ENCODE measurements at regions of chr6 and their contacts with region 1.

Region 1: DNA sequence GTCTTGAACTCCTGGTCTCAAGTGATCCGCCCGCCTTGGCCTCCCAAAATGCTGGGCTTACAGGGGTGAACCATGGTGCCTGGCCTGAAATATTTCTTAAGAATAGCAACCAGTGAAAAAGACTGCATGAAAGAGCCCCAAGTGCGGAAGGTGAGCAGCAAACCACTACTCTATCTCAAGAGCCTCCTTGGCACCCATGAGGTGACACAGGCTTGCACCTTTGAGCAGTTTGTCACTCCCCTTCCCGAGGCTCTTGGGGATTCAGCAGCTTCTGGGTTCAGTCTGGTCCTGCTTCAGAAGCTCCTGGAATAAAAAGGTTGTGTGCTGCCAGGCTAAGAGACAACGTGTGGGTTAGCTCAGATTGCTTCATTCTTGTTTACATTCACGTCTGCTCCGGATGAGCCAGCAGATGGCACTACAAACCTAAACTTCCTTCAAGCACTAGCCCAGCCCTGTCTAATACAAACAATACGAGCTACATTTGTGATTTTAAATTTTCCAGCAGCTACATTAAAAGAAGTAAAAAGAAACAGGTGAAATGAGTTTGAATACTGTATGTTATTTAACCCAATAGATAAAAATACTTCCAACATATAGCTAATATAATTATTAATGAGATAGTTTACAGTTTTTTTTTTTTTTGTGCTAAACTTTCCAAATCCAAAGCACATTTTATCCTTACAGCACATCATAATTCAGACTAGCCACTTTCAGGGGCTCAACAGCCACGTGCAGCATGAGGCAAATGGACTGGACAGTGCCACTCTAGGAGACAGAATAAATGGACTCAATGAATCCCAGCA is 46.2 kb downstream of the GJA10 start:
- DNase-seq: peak; percentile 69
- H3K4me3 ChIP-seq: no peak overlapping the region
- H3K27ac ChIP-seq: no peak overlapping the region
- H3K4me1 ChIP-seq: no peaks in the 10 kb centered on the region
- H3K27me3 ChIP-seq: no peaks in the 10 kb centered on the region
- CTCF ChIP-seq: peak; percentile 65 to 83

Region 2: GRCh38 chr6:89970609-89971337 is 30.3 kb after region 1 on chr6:
- CTCF ChIA-PET with region 1: no interaction called
- dilution Hi-C with region 1: no loop called
- in situ Hi-C with region 1: no loop called
- intact Hi-C with region 1: loop called (anchors 1 kb)
- DNase-seq: peak; percentile 45
- H3K4me3 ChIP-seq: no peak overlapping the region
- H3K27ac ChIP-seq: no peak overlapping the region
- H3K4me1 ChIP-seq: peaks cover 6% of the 10 kb centered on the region
- H3K27me3 ChIP-seq: no peaks in the 10 kb centered on the region
- CTCF ChIP-seq: peak; percentile 54 to 64

Region 3: GRCh38 chr6:89984926-89985750 is 44.7 kb after region 1 on chr6:
- CTCF ChIA-PET with region 1: no interaction called
- dilution Hi-C with region 1: no loop called
- in situ Hi-C with region 1: no loop called
- intact Hi-C with region 1: no loop called
- DNase-seq: no peak
- H3K4me3 ChIP-seq: no peak overlapping the region
- H3K27ac ChIP-seq: no peak overlapping the region
- H3K4me1 ChIP-seq: peaks cover 11% of the 10 kb centered on the region
- H3K27me3 ChIP-seq: no peaks in the 10 kb centered on the region
- CTCF ChIP-seq: no peak

Region 4: GRCh38 chr6:90285611-90286381 is 345.4 kb after region 1 on chr6:
- CTCF ChIA-PET with region 1: interaction called, 17 read pairs
- dilution Hi-C with region 1: no loop called
- in situ Hi-C with region 1: no loop called
- intact Hi-C with region 1: loop called (anchors 1 kb)
- DNase-seq: peak; percentile 92
- H3K4me3 ChIP-seq: no peak overlapping the region
- H3K27ac ChIP-seq: peak overlapping the region; percentile 90
- H3K4me1 ChIP-seq: peaks cover 24% of the 10 kb centered on the region
- H3K27me3 ChIP-seq: no peaks in the 10 kb centered on the region
- CTCF ChIP-seq: no peak

Region 5: DNA sequence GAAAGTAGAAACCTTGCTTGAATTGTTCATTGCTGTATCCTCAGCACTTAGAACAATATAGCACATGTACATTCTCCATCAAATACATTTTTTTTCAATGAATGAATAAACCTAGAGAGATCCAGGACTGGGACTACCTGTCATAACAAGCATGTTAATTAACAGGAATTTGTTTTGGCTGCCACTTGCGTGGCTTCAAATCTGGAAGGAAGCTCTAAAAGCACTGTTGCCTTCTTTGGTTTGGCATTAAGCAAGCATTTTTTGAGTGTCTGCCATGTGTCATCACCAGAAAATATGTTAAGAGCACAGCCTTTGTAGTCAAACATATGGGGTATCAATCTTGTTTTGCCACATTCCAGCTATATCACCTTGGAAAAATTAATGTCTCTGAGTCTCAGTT is 488.1 kb after region 1 on chr6:
- CTCF ChIA-PET with region 1: interaction called, 10 read pairs
- dilution Hi-C with region 1: no loop called
- in situ Hi-C with region 1: no loop called
- intact Hi-C with region 1: no loop called
- DNase-seq: peak; percentile 89
- H3K4me3 ChIP-seq: no peak overlapping the region
- H3K27ac ChIP-seq: no peak overlapping the region
- H3K4me1 ChIP-seq: peaks cover 5% of the 10 kb centered on the region
- H3K27me3 ChIP-seq: no peaks in the 10 kb centered on the region
- CTCF ChIP-seq: no peak

Region 6: GRCh38 chr6:90478789-90479602 is 538.6 kb after region 1 on chr6:
- CTCF ChIA-PET with region 1: interaction called, 20 read pairs
- dilution Hi-C with region 1: no loop called
- in situ Hi-C with region 1: loop called (anchors 5 to 10 kb)
- intact Hi-C with region 1: loop called (anchors 1 kb)
- DNase-seq: peak; percentile 93
- H3K4me3 ChIP-seq: no peak overlapping the region
- H3K27ac ChIP-seq: no peak overlapping the region
- H3K4me1 ChIP-seq: peaks cover 16% of the 10 kb centered on the region
- H3K27me3 ChIP-seq: no peaks in the 10 kb centered on the region
- CTCF ChIP-seq: peak; percentile 80 to 88